Caco-2 (cell line): ENCODE measurements at regions of chr20 and their contacts with region 1.

Region 1: DNA sequence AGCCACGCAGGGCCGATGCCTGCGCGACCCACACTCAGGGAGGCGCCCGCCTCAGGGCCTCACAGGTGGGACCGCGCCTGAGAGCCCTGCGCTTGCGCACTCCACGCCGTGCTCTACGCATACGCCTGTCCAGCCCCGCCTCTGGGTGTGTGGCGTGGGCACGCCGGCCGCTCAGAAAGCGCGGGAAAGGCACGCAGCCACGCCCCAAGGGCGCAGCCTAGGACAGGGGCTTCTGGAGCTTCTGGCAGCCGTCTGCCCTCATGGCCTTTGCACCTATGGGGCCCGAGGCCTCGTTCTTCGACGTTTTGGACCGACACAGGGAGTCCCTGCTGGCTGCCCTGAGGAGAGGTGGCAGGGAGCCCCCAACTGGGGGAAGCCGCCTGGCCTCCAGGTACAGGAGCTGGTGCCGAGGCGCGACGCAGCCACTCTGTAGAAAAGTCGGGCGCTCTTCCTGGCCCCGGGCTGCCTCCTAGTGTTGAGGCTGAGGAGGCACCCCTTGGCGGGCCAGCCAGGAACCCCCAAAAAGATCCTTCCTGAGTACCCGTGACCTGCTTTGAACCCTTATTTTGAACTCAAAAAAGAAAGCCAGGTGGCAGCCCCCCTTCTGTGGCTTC is at the start of gene SPO11:
- DNase-seq: peak; percentile 67 to 79
- H3K4me3 ChIP-seq: no peak within 1 kb of the TSS
- H3K4me3 Mint-ChIP-seq: peak within 1 kb of the TSS; percentile 42
- H3K27ac Mint-ChIP-seq: peak within 1 kb of the TSS; percentile 68
- H3K4me1 ChIP-seq: peaks cover 52% of the 10 kb centered on the region
- H3K4me1 Mint-ChIP-seq: peaks cover 38% of the 10 kb centered on the region
- H3K27me3 ChIP-seq: no peaks in the 10 kb centered on the region
- H3K27me3 Mint-ChIP-seq: no peaks in the 10 kb centered on the region
- CTCF ChIP-seq: peak; percentile 41 to 80
- total RNA-seq, gene SPO11: not detected in 2 replicates

Region 2: DNA sequence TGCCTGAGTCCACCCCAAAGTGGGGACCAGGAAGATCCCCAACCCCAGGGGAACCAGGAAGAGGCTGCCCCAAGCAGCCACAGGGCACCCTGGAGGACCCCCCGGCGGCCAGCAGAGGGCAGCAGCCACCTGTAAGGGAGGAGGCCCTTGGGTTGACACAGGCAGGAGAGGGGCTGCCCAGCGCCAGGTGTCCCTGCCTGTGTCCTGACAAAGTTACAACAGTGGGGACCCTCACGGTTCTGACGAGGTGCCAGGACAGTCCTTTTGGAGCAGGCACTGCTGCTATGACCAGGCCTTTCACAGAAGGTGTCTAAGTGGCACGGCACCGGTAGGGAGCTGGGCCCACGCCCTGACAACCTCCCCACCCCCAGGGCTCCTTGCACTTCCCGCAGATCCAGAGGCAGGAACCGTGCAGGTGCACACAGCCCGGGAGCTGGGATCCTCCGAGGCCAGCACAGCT is 240.0 kb before region 1 on chr20:
- CTCF ChIA-PET with region 1: interaction called, 56 read pairs
- POLR2A ChIA-PET with region 1: no interaction called
- intact Hi-C with region 1: no loop called
- DNase-seq: peak; percentile 92 to 97
- H3K4me3 ChIP-seq: no peak overlapping the region
- H3K4me3 Mint-ChIP-seq: no peak overlapping the region
- H3K27ac Mint-ChIP-seq: peak overlapping the region; percentile 1
- H3K4me1 ChIP-seq: peaks cover 7% of the 10 kb centered on the region
- H3K4me1 Mint-ChIP-seq: peaks cover 18% of the 10 kb centered on the region
- H3K27me3 ChIP-seq: no peaks in the 10 kb centered on the region
- H3K27me3 Mint-ChIP-seq: peaks cover 4% of the 10 kb centered on the region
- CTCF ChIP-seq: peak; percentile 100

Region 3: GRCh38 chr20:57223648-57224489 is 105.8 kb before region 1 on chr20:
- CTCF ChIA-PET with region 1: interaction called, 39 read pairs
- POLR2A ChIA-PET with region 1: no interaction called
- intact Hi-C with region 1: loop called (anchors 1 kb)
- DNase-seq: no peak
- H3K4me3 ChIP-seq: no peak overlapping the region
- H3K4me3 Mint-ChIP-seq: no peak overlapping the region
- H3K27ac Mint-ChIP-seq: peak overlapping the region; percentile 5
- H3K4me1 ChIP-seq: no peaks in the 10 kb centered on the region
- H3K4me1 Mint-ChIP-seq: no peaks in the 10 kb centered on the region
- H3K27me3 ChIP-seq: no peaks in the 10 kb centered on the region
- H3K27me3 Mint-ChIP-seq: no peaks in the 10 kb centered on the region
- CTCF ChIP-seq: peak; percentile 6 to 51

Region 4: GRCh38 chr20:57259121-57259937 is 70.4 kb before region 1 on chr20:
- CTCF ChIA-PET with region 1: interaction called, 74 read pairs
- POLR2A ChIA-PET with region 1: interaction called, 5 read pairs
- intact Hi-C with region 1: loop called (anchors 1 kb)
- DNase-seq: no peak
- H3K4me3 ChIP-seq: no peak overlapping the region
- H3K4me3 Mint-ChIP-seq: no peak overlapping the region
- H3K27ac Mint-ChIP-seq: no peak overlapping the region
- H3K4me1 ChIP-seq: peaks cover 39% of the 10 kb centered on the region
- H3K4me1 Mint-ChIP-seq: peaks cover 69% of the 10 kb centered on the region
- H3K27me3 ChIP-seq: no peaks in the 10 kb centered on the region
- H3K27me3 Mint-ChIP-seq: no peaks in the 10 kb centered on the region
- CTCF ChIP-seq: no peak

Region 5: DNA sequence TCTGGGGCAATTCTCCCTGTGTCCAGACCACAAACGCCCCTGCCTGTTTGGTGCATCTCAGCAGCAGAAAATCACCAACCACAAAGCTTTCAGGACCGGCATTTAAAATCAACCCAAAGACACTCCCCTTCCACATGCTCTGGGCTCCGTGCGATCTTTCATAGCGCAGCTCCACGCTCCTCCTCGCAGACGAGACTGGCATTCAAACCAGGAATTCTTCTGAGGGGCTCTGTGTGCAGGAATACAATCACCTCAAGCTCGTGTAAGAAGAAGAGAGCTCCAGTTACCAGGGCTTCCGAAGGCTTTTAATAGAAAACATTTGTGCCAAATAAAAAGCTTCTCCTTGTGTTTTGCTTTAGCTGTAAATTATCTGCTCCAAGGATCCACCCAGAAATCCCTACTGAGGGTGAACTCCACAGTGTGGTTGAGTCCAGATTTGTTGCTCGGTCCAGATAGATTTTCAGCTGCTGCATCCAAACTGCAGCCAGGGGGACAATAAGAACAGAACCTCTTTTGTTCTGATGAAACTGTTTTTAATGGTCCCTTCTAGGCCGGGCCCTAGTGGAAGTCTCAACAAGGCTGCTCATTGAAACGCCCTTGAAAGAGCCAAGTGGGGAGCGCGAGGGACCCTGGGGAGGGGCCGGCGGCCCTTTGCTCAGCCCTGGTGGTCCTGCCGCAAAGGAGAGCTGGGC is 46.9 kb before region 1 on chr20:
- CTCF ChIA-PET with region 1: interaction called, 29 read pairs
- POLR2A ChIA-PET with region 1: interaction called, 7 read pairs
- intact Hi-C with region 1: loop called (anchors 2 kb)
- DNase-seq: no peak
- H3K4me3 ChIP-seq: no peak overlapping the region
- H3K4me3 Mint-ChIP-seq: no peak overlapping the region
- H3K27ac Mint-ChIP-seq: peak overlapping the region; percentile 50
- H3K4me1 ChIP-seq: peaks cover 51% of the 10 kb centered on the region
- H3K4me1 Mint-ChIP-seq: peaks cover 46% of the 10 kb centered on the region
- H3K27me3 ChIP-seq: no peaks in the 10 kb centered on the region
- H3K27me3 Mint-ChIP-seq: no peaks in the 10 kb centered on the region
- CTCF ChIP-seq: peak in 1 of 2 experiments; percentile 8

Region 6: DNA sequence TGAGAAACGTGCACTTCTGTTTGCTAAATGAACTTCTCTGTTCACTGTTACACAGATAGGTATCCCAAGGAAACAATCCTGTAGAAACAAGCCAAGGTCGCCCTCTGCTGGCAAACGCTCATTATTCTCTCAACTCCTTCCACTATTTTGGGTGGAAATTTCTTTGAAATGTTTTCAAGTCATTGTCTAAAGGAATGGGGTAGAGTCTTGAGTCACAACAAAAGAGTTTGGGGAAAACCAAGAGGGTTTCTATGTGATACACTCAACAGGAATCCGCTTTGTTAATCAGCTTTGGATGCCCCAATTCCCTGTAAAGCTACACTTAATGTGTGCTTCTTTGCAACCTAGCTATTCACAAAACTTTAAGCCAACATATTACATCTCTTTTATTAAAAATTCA is 16.8 kb after region 1 on chr20:
- CTCF ChIA-PET with region 1: interaction called, 15 read pairs
- POLR2A ChIA-PET with region 1: no interaction called
- intact Hi-C with region 1: no loop called
- DNase-seq: peak; percentile 85 to 90
- H3K4me3 ChIP-seq: no peak overlapping the region
- H3K4me3 Mint-ChIP-seq: no peak overlapping the region
- H3K27ac Mint-ChIP-seq: no peak overlapping the region
- H3K4me1 ChIP-seq: no peaks in the 10 kb centered on the region
- H3K4me1 Mint-ChIP-seq: no peaks in the 10 kb centered on the region
- H3K27me3 ChIP-seq: no peaks in the 10 kb centered on the region
- H3K27me3 Mint-ChIP-seq: no peaks in the 10 kb centered on the region
- CTCF ChIP-seq: peak; percentile 90 to 97